IMR-90 (cell line): ENCODE measurements at regions of chr12 and their contacts with region 1.

Region 1: DNA sequence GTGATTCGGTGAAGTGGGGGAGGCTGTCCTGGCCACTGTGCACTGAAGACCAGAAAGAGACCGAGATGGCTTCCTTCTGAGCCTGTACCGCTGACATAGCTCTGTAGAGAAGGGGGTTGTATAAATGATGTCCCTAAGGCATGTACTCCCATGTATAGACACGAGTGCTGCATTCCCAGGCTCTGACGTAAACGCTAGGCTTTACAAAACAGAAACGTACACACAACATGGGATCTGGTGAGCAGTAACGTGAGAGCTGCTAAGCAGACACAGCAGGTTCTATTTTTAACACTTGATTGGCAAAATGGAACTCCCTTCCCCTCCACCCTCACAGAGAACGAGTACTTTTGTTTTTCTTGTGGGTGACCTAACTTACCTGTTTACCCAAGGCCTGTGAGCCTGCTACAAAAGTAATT is 35.9 kb downstream of the ACADS start:
- DNase-seq: peak; percentile 57
- ATAC-seq: 0 out of 2 replicates have a peak, but pooled peaks have one; percentile 17
- H3K4me3 ChIP-seq: no peak overlapping the region
- H3K27ac ChIP-seq: no peak overlapping the region
- H3K4me1 ChIP-seq: no peaks in the 10 kb centered on the region
- H3K27me3 ChIP-seq: no peaks in the 10 kb centered on the region
- CTCF ChIP-seq: no peak
- POLR2A ChIP-seq: no peak
- RAD21 ChIP-seq: no peak

Region 2: GRCh38 chr12:120327593-120327992 is 433.9 kb before region 1 on chr12 and contains the start of gene PLA2G1B:
- CTCF ChIA-PET with region 1: no interaction called
- POLR2A ChIA-PET with region 1: no interaction called
- dilution Hi-C with region 1: no loop called
- in situ Hi-C with region 1: no loop called
- intact Hi-C with region 1: loop called (anchors 5 kb)
- DNase-seq: no peak
- ATAC-seq: no peak
- H3K4me3 ChIP-seq: no peak within 1 kb of the TSS
- H3K27ac ChIP-seq: no peak within 1 kb of the TSS
- H3K4me1 ChIP-seq: no peaks in the 10 kb centered on the region
- H3K27me3 ChIP-seq: peaks cover 14% of the 10 kb centered on the region; the same call in 1 of the 2 replicates
- CTCF ChIP-seq: no peak
- POLR2A ChIP-seq: no peak
- RAD21 ChIP-seq: no peak
- total RNA-seq, gene PLA2G1B: not detected in 2 replicates